ENCODE measurements at regions of chr1 and their contacts with region 1.

Region 1: DNA sequence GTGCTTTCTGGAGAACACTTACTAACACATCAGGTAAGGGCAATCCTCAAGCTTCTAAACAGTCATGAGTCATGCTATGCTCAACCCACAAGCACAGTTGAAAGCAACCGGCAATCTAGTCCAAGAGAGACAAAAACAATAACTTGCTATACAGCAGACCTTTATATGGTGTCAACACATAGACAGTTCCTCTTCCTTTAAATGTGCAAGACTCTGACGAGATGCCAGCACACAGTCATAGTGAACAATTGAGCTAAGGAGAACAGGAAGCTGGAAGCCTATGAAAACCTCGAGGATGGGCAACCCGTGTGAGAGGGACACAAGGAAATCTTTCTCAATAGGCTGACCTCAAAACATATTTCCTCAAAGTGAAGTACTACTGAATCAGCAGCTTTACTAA is 5.3 kb downstream of the ADIPOR1 start:
- DNase-seq: peak; percentile 93
- H3K4me3 ChIP-seq: peak overlapping the region in 1 of 3 experiments; percentile 5
- H3K27ac ChIP-seq: peak overlapping the region; percentile 61
- H3K4me1 ChIP-seq: peaks cover 48% of the 10 kb centered on the region
- H3K27me3 ChIP-seq: no peaks in the 10 kb centered on the region
- CTCF ChIP-seq: no peak

Region 2: DNA sequence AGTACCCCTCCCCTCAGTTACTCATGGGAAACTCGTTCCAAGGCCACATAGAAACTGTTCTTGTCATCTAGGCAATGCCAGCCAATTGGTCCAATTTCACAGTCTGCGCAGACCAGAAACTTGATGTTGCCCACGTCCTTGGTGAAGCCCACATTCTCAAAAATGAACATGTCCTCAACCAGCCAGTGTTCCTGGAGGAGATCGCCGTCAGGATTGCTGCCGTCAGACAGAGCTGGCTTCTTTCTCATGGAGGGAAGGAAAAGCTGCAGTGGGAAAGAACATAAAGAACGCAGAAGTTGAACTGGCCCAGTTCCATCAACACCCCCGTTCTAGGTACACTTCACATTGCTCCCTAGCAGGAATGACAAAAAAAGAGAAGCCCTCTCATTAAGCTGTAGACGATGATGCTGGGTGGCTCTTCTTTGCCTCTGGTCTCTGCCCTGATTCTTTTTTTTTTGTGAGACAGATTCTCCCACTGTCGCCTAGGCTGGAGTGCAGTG is 71.8 kb before region 1 on chr1:
- CTCF ChIA-PET with region 1: no interaction called
- dilution Hi-C with region 1: no loop called
- in situ Hi-C with region 1: no loop called
- intact Hi-C with region 1: no loop called
- DNase-seq: no peak
- H3K4me3 ChIP-seq: no peak overlapping the region
- H3K27ac ChIP-seq: no peak overlapping the region
- H3K4me1 ChIP-seq: no peaks in the 10 kb centered on the region
- H3K27me3 ChIP-seq: no peaks in the 10 kb centered on the region
- CTCF ChIP-seq: no peak

Region 3: GRCh38 chr1:203017692-203018091 is 64.9 kb after region 1 on chr1:
- CTCF ChIA-PET with region 1: no interaction called
- dilution Hi-C with region 1: loop called (anchors 5 kb)
- in situ Hi-C with region 1: no loop called
- intact Hi-C with region 1: no loop called
- DNase-seq: no peak
- H3K4me3 ChIP-seq: no peak overlapping the region
- H3K27ac ChIP-seq: no peak overlapping the region
- H3K4me1 ChIP-seq: no peaks in the 10 kb centered on the region
- H3K27me3 ChIP-seq: no peaks in the 10 kb centered on the region
- CTCF ChIP-seq: no peak

Region 4: GRCh38 chr1:203057911-203058675 is 105.3 kb after region 1 on chr1:
- CTCF ChIA-PET with region 1: no interaction called
- dilution Hi-C with region 1: no loop called
- in situ Hi-C with region 1: no loop called
- intact Hi-C with region 1: no loop called
- DNase-seq: no peak
- H3K4me3 ChIP-seq: no peak overlapping the region
- H3K27ac ChIP-seq: no peak overlapping the region
- H3K4me1 ChIP-seq: no peaks in the 10 kb centered on the region
- H3K27me3 ChIP-seq: no peaks in the 10 kb centered on the region
- CTCF ChIP-seq: no peak